ENCODE measurements at regions of chr2 and their contacts with region 1.

Region 1: GRCh38 chr2:96477458-96477857 is 27.7 kb downstream of the NEURL3 start:
- DNase-seq: no peak
- H3K4me3 ChIP-seq: no peak overlapping the region
- H3K27ac ChIP-seq: no peak overlapping the region
- H3K4me1 ChIP-seq: no peaks in the 10 kb centered on the region
- H3K27me3 ChIP-seq: no peaks in the 10 kb centered on the region
- CTCF ChIP-seq: no peak
- POLR2A ChIP-seq: no peak

Region 2: GRCh38 chr2:96423828-96424227 is 53.6 kb before region 1 on chr2:
- intact Hi-C with region 1: loop called (anchors 2 kb)
- DNase-seq: no peak
- H3K4me3 ChIP-seq: no peak overlapping the region
- H3K27ac ChIP-seq: no peak overlapping the region
- H3K4me1 ChIP-seq: no peaks in the 10 kb centered on the region
- H3K27me3 ChIP-seq: no peaks in the 10 kb centered on the region
- CTCF ChIP-seq: no peak
- POLR2A ChIP-seq: no peak

Region 3: DNA sequence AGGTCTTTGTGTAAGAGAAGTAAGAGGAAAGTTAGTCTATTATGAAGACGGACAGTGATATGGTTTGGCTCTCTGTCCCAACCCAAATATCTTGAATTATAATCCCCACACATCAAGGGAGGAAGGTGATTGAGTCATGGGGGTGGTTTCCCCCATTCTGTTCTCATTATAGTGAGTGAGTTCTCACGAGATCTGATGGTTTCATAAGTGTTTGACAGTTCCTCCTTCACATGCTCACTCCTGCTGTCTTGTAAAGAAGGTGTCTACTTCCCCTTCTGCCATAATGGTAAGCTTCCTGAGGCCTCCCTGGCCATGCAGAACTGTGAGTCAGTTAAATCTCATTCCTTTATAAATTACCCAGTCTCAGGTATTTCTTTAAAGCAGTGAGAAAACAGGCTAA is 39.9 kb before region 1 on chr2:
- intact Hi-C with region 1: no loop called
- DNase-seq: no peak
- H3K4me3 ChIP-seq: no peak overlapping the region
- H3K27ac ChIP-seq: no peak overlapping the region
- H3K4me1 ChIP-seq: no peaks in the 10 kb centered on the region
- H3K27me3 ChIP-seq: no peaks in the 10 kb centered on the region
- CTCF ChIP-seq: no peak
- POLR2A ChIP-seq: no peak